AG04449 (cell line): ENCODE measurements at regions of chr10 and their contacts with region 1.

Region 1: GRCh38 chr10:13659897-13660550 is 73.3 kb downstream of the PRPF18 start:
- DNase-seq: no peak
- H3K4me3 ChIP-seq: no peak overlapping the region
- CTCF ChIP-seq: peak; percentile 86

Region 2: DNA sequence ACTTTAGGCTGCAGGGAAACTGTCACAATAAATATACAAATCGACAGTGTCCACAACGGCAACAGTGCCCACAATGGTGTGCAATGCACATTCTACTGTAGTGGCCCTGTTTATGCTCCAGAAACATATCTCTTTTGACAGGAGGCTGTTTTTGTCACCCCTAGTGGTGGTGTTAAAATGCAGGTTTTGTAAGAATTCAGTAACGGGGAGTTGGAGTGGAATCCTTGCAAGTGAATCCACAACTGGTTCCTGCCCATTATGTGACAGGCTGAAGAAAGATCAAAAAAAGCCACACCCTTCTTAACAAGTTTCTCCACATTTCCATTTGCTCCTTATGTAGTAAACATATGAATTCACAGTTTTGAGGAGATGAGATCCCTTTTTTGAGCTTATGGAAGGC is 189.8 kb before region 1 on chr10:
- CTCF ChIA-PET with region 1: no interaction called
- POLR2A ChIA-PET with region 1: no interaction called
- DNase-seq: no peak
- H3K4me3 ChIP-seq: no peak overlapping the region
- CTCF ChIP-seq: no peak

Region 3: GRCh38 chr10:13649844-13650521 is 10.0 kb before region 1 on chr10:
- CTCF ChIA-PET with region 1: interaction called, 52 read pairs
- POLR2A ChIA-PET with region 1: no interaction called
- DNase-seq: no peak
- H3K4me3 ChIP-seq: no peak overlapping the region
- CTCF ChIP-seq: no peak

Region 4: DNA sequence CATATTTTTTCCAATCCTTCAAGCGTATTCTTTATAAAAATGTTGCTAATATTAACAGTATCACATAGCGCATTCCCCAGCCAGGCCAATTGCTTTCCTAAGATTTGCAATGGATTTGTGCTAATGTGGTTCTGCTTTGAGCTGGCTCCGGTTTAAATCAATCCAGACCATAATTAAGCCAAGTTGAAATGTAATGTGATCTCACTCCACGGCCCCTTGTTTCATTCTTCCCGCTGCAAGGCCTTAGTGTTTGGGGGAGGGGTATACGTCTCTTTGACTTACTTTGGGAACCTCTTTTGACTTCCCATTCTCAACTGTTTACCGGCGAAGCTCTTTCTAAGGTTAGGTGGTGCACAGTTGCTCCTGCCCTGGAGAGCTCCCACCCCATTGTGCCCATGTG is 13.1 kb after region 1 on chr10:
- CTCF ChIA-PET with region 1: interaction called, 16 read pairs
- POLR2A ChIA-PET with region 1: no interaction called
- DNase-seq: no peak
- H3K4me3 ChIP-seq: no peak overlapping the region
- CTCF ChIP-seq: no peak

Region 5: GRCh38 chr10:13707156-13707881 is 47.3 kb after region 1 on chr10:
- CTCF ChIA-PET with region 1: interaction called, 10 read pairs
- POLR2A ChIA-PET with region 1: no interaction called
- DNase-seq: no peak
- H3K4me3 ChIP-seq: peak overlapping the region; percentile 81
- CTCF ChIP-seq: no peak

Region 6: GRCh38 chr10:13776861-13777311 is 116.9 kb after region 1 on chr10:
- CTCF ChIA-PET with region 1: interaction called, 79 read pairs
- POLR2A ChIA-PET with region 1: no interaction called
- DNase-seq: no peak
- H3K4me3 ChIP-seq: no peak overlapping the region
- CTCF ChIP-seq: no peak

Region 7: GRCh38 chr10:14878266-14879054 is 1218.4 kb after region 1 on chr10 and contains the start of gene SUV39H2:
- CTCF ChIA-PET with region 1: no interaction called
- POLR2A ChIA-PET with region 1: no interaction called
- DNase-seq: no peak
- H3K4me3 ChIP-seq: peak within 1 kb of the TSS; percentile 99
- CTCF ChIP-seq: no peak